Endothelial cell of umbilical vein (primary cell): ENCODE measurements at regions of chr9 and their contacts with region 1.

Region 1: GRCh38 chr9:72364679-72365524 is at the start of gene ZFAND5:
- DNase-seq: peak; percentile 96
- H3K4me3 ChIP-seq: peak within 1 kb of the TSS; percentile 54 to 88 (median 56)
- H3K27ac ChIP-seq: peak within 1 kb of the TSS; percentile 97
- H3K4me1 ChIP-seq: peaks cover 19% of the 10 kb centered on the region
- H3K27me3 ChIP-seq: no peaks in the 10 kb centered on the region
- CTCF ChIP-seq: no peak
- POLR2A ChIP-seq: peak; percentile 99
- total RNA-seq, gene ZFAND5: 176 and 194 TPM in 2 replicates

Region 2: DNA sequence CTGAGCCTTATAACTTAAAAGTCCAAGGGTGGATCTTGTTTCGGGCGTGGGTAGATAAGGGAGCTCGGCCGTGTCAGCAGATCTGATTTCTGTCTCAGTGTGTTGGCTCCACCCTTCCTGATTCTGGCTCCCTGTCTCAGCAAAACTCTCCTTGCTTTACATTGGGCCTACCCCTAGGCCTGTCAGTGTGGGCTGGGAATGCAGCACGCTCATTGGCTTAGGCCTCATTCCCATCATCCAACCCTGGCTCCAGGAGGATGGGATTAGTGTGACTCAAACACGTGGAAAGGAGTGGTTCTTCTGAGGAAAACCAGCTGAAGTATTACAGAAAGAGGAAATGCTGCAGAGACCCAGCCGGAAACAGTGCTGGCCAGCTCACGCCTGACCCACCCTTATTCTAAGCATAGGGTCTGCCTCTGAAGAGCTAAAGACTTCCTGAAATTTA is 59.8 kb before region 1 on chr9:
- CTCF ChIA-PET with region 1: no interaction called
- POLR2A ChIA-PET with region 1: interaction called, 6 read pairs
- dilution Hi-C with region 1: no loop called
- intact Hi-C with region 1: loop called (anchors 1 kb)
- DNase-seq: peak; percentile 95
- H3K4me3 ChIP-seq: peak overlapping the region in 2 of 3 experiments; percentile 8 to 53
- H3K27ac ChIP-seq: peak overlapping the region; percentile 53
- H3K4me1 ChIP-seq: peaks cover 7% of the 10 kb centered on the region
- H3K27me3 ChIP-seq: no peaks in the 10 kb centered on the region
- CTCF ChIP-seq: no peak
- POLR2A ChIP-seq: peak; percentile 50

Region 3: GRCh38 chr9:72464857-72465592 is 100.1 kb after region 1 on chr9:
- CTCF ChIA-PET with region 1: interaction called, 3 read pairs
- POLR2A ChIA-PET with region 1: interaction called, 12 read pairs
- dilution Hi-C with region 1: no loop called
- intact Hi-C with region 1: loop called (anchors 1 kb)
- DNase-seq: peak; percentile 85
- H3K4me3 ChIP-seq: peak overlapping the region in 1 of 3 experiments; percentile 38
- H3K27ac ChIP-seq: peak overlapping the region; percentile 82
- H3K4me1 ChIP-seq: peaks cover 35% of the 10 kb centered on the region
- H3K27me3 ChIP-seq: no peaks in the 10 kb centered on the region
- CTCF ChIP-seq: no peak
- POLR2A ChIP-seq: no peak

Region 4: GRCh38 chr9:72526901-72527800 is 162.2 kb after region 1 on chr9:
- CTCF ChIA-PET with region 1: interaction called, 9 read pairs
- POLR2A ChIA-PET with region 1: interaction called, 43 read pairs
- dilution Hi-C with region 1: no loop called
- intact Hi-C with region 1: loop called (anchors 1 kb)
- DNase-seq: peak; percentile 97
- H3K4me3 ChIP-seq: no peak overlapping the region
- H3K27ac ChIP-seq: peak overlapping the region; percentile 97
- H3K4me1 ChIP-seq: peaks cover 34% of the 10 kb centered on the region
- H3K27me3 ChIP-seq: no peaks in the 10 kb centered on the region
- CTCF ChIP-seq: no peak
- POLR2A ChIP-seq: no peak

Region 5: GRCh38 chr9:72592502-72593403 is 227.9 kb after region 1 on chr9:
- CTCF ChIA-PET with region 1: interaction called, 70 read pairs
- POLR2A ChIA-PET with region 1: interaction called, 31 read pairs
- dilution Hi-C with region 1: no loop called
- intact Hi-C with region 1: loop called (anchors 1 kb)
- DNase-seq: peak; percentile 79
- H3K4me3 ChIP-seq: no peak overlapping the region
- H3K27ac ChIP-seq: no peak overlapping the region
- H3K4me1 ChIP-seq: no peaks in the 10 kb centered on the region
- H3K27me3 ChIP-seq: no peaks in the 10 kb centered on the region
- CTCF ChIP-seq: peak; percentile 47 to 57
- POLR2A ChIP-seq: no peak